HEK293 (cell line): ENCODE measurements at regions of chr15 and their contacts with region 1.

Region 1: DNA sequence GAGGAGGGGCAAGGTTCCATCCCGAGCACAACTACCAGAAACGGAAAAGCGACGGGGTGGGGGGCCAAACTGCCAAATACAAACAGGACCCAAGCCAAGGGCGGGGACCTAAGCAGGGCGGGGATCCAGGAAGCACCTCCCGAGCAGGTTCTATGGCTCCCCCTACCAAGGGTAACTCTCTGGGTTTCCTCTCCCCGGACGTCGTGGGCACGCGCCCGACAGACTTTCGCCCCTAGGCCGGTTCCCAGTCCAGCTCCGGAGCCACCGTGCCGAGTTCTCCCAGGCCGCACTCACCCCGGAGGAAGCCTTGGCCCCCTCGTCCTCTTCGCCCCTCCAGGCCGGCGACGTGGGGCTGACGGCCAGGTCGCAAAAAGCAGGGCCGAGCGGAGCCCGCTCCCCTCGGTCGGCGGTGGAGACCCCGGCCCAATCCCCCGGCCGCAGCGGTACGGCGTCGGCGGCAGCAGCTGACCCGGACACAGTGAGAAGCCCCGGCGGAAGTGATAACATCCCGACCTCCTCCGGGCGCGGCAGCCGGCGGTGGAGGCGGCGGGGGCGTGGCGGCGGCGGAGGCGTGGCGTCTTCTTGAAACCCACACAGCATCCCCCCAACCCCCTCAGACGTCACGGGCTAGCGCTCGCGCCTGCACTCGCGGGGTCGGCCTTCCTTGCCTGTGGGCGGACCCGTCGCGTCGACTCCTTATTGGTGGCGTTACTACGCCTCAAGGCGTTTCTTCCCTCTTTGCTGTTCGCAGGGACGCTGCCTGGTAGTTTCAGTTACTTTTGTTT is at the start of gene BNIP2:
- H3K4me3 ChIP-seq: peak within 1 kb of the TSS; percentile 99
- H3K27ac ChIP-seq: peak within 1 kb of the TSS; percentile 85
- H3K4me1 ChIP-seq: peaks cover 7% of the 10 kb centered on the region; the same call in 1 of the 2 replicates
- CTCF ChIP-seq: peak; percentile 46

Region 2: DNA sequence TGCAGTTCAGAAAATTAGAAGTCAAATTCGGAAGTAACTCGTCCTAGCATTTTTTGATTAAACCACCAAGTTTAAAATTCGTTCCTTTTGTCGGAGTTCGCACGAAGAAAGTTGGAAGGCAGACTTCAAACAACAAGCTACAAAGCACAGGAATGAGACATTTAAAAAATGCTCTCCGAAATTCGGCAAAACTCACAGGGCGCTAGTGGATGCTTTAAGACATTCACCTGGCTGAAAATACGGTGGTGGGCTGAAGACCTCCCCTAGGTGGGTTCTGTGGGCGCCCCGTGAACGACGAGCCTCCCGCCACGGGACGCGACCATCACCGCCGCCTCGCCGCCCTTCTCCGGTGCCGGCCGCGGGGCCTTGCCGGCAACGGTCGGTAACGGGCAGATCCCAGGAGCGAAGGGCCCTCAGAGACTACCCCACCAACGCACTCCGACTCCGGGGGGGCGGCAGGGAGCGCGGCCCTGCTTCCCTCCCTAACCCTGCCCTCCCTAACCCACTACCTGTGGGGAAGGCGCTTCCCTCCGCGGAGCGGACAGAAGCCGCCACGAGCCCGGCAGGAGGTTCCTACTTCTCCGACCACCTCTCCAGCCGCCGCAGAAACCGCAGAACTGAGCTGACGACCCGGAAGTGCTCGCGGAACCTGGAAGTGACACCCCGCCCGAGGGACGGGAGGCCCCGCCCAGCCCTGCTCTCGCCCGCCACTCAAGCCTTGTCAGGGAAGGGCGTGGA is 32.0 kb before region 1 on chr15 and contains the start of gene GTF2A2:
- CTCF ChIA-PET with region 1: no interaction called
- POLR2A ChIA-PET with region 1: interaction called, 10 read pairs
- H3K4me3 ChIP-seq: peak within 1 kb of the TSS; percentile 93
- H3K27ac ChIP-seq: peak within 1 kb of the TSS; percentile 11; the same call in 1 of the 2 replicates
- H3K4me1 ChIP-seq: no peaks in the 10 kb centered on the region
- CTCF ChIP-seq: no peak

Region 3: GRCh38 chr15:59678620-59679019 is 10.4 kb before region 1 on chr15:
- CTCF ChIA-PET with region 1: no interaction called
- POLR2A ChIA-PET with region 1: no interaction called
- H3K4me3 ChIP-seq: no peak overlapping the region
- H3K27ac ChIP-seq: no peak overlapping the region
- H3K4me1 ChIP-seq: no peaks in the 10 kb centered on the region
- CTCF ChIP-seq: no peak

Region 4: GRCh38 chr15:59699810-59700431 is 10.9 kb after region 1 on chr15:
- CTCF ChIA-PET with region 1: interaction called, 15 read pairs
- POLR2A ChIA-PET with region 1: no interaction called
- H3K4me3 ChIP-seq: no peak overlapping the region
- H3K27ac ChIP-seq: no peak overlapping the region
- H3K4me1 ChIP-seq: peaks cover 24% of the 10 kb centered on the region
- CTCF ChIP-seq: no peak

Region 5: GRCh38 chr15:59725172-59725486 is 36.1 kb after region 1 on chr15:
- CTCF ChIA-PET with region 1: interaction called, 19 read pairs
- POLR2A ChIA-PET with region 1: no interaction called
- H3K4me3 ChIP-seq: no peak overlapping the region
- H3K27ac ChIP-seq: no peak overlapping the region
- H3K4me1 ChIP-seq: no peaks in the 10 kb centered on the region
- CTCF ChIP-seq: no peak

Region 6: GRCh38 chr15:59751552-59752413 is 62.8 kb after region 1 on chr15:
- CTCF ChIA-PET with region 1: interaction called, 13 read pairs
- POLR2A ChIA-PET with region 1: no interaction called
- H3K4me3 ChIP-seq: no peak overlapping the region
- H3K27ac ChIP-seq: no peak overlapping the region
- H3K4me1 ChIP-seq: no peaks in the 10 kb centered on the region
- CTCF ChIP-seq: peak; percentile 78